ENCODE measurements at regions of chr2 and their contacts with region 1.

Region 1: GRCh38 chr2:61423716-61424115 is 47.2 kb downstream of the USP34 start:
- DNase-seq: no peak

Region 2: GRCh38 chr2:61356261-61356957 is 67.3 kb before region 1 on chr2:
- intact Hi-C with region 1: no loop called
- DNase-seq: no peak

Region 3: DNA sequence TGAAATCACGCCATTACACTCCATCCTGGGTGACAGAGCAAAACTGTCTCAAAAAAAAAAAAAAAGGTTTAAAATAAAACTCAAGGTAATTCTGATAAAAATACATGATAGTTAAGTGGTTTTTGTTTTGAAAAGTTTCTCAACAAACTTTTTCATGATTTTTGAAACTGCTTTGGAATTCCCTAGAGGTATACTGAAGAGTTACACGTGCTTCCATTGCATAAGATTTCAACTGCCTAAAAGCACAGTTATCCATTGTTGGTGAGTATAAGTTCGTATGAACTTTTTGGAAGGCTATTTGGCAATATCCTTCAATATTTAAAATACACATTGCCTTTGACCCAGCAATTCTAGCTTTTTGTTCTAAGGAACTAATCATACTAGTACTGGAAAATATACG is 27.7 kb before region 1 on chr2:
- intact Hi-C with region 1: loop called in 1 of 2 experiments (anchors 1 kb)
- DNase-seq: no peak